ENCODE measurements at regions of chr22 and their contacts with region 1.

Region 1: DNA sequence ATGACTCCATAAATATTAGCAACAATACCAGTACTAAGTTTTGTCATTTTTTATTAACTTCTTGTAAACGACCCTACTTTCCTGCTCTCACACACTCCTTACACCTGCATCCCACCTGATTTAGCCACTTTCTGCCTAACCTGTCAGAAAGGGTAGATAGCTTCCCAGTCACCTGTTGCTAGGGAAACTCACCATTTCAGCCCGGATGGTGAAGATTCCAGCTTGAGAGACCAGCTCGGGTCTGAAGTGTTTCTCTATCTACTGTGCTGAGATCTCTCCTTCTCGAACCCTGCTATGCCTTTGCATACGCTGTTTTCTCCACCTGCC is at the start of gene PARVG:
- DNase-seq: peak in 8 of 9 donors; percentile 32 to 79 (median 75)
- ATAC-seq: peak; percentile 73
- H3K4me3 ChIP-seq: peak within 1 kb of the TSS; percentile 83
- H3K4me3 Mint-ChIP-seq: peak within 1 kb of the TSS; percentile 84 to 97 (median 92)
- H3K27ac ChIP-seq: peak within 1 kb of the TSS; percentile 80
- H3K27ac Mint-ChIP-seq: peak within 1 kb of the TSS; percentile 88 to 98 (median 95)
- H3K4me1 ChIP-seq: peaks cover 11 to 14% of the 10 kb centered on the region in 2 donors
- H3K4me1 Mint-ChIP-seq: peaks cover 15 to 33% (median 30%) of the 10 kb centered on the region in 7 donors
- H3K27me3 ChIP-seq: no peaks in the 10 kb centered on the region
- H3K27me3 Mint-ChIP-seq: peaks cover 0 to 10% (median 0%) of the 10 kb centered on the region in 5 donors
- total RNA-seq, gene PARVG: 142 to 209 (median 173) TPM

Region 2: DNA sequence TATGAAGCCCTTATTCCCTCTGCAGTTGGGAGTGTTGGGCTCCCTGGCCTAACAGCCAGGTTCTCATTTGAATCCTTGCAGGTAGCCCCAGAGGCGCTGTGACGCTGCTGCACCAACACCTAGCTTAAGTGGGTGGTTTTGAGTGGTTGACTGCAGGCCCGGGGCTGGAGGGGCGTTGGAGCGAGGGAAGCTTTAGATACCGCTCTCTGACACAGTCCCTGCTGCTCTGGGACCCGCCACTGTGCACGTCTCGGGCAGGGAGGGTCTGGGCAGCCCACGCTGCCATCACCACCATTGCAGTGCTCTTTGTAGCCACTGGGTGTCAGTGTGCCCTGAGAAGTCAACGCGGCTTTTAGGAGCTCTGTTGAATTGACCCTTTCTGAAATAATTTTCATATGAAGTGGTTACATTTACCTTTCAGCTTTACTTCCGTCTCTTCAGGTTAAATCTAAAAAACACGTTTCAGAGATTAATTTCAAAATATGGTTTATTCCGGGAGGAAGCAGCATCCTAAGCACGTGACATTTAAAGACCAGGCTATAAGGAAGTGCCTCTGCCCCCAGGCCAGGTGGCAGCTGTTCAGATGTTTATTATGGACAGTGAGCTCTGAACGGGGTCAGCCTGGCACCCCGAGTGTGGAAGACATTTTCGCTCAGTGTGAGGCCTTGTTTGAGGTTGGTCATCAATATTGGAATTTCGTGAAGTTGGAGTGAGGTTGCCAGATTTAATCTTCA is 187.5 kb before region 1 on chr22:
- CTCF ChIA-PET with region 1: no interaction called
- POLR2A ChIA-PET with region 1: no interaction called
- intact Hi-C with region 1: loop called in 1 of 2 experiments (anchors 5 kb)
- DNase-seq: peak; percentile 14 to 60 (median 52)
- ATAC-seq: peak; percentile 84
- H3K4me3 ChIP-seq: no peak overlapping the region
- H3K4me3 Mint-ChIP-seq: peak overlapping the region in 2 of 10 donors; percentile 42 to 54
- H3K27ac ChIP-seq: no peak overlapping the region
- H3K27ac Mint-ChIP-seq: peak overlapping the region in 7 of 9 donors; percentile 22 to 93 (median 68)
- H3K4me1 ChIP-seq: peaks cover 0 to 6% of the 10 kb centered on the region in 2 donors
- H3K4me1 Mint-ChIP-seq: peaks cover 26 to 42% (median 33%) of the 10 kb centered on the region in 7 donors
- H3K27me3 ChIP-seq: no peaks in the 10 kb centered on the region
- H3K27me3 Mint-ChIP-seq: no peaks in the 10 kb centered on the region

Region 3: DNA sequence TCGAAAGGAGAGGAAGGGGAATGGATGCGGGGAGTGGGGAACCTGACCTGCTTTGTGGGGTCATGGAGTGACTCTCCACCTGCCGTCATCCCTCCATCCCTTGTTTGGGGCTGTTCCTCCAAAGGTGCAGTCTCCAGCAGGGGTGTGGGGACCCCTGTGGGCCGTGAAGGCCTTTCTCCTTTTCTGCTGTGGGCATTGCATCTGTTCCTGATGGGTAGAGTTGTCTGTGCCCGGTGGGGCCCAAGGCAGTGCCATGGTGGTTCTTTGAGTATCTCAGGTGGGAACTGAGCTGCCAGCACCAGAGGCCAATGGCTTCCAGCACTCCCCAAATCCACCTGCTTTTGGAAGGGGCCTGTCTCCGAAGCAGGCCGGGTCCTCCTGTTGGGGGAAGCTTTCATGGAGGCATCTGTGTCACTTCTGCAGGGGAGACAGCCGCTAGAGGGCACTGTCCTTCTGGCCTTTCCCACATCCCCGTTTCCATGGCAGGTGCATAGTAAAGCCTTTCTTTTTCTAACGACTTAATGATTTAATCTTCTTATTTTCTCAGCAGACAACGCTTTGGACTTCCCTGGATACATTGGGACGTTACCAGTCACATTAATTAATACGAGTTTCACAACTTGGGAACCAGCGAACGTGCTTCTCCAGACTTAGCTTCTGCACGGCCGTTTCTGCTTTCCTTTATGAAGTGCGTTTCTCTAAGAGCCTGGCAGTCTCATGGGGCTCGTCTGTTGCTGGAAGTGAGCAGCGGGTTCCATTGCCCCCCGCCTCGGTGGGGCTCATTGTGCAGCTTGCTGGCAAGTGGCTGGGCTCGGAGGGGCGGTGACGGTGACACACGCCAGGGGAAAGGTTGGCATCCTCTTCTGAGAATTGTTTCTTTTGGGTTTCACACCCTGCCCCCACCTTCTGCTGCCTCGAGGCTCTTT is 99.5 kb before region 1 on chr22:
- CTCF ChIA-PET with region 1: no interaction called
- POLR2A ChIA-PET with region 1: no interaction called
- intact Hi-C with region 1: loop called (anchors 5 to 10 kb)
- DNase-seq: peak; percentile 15 to 58 (median 50)
- ATAC-seq: peak; percentile 72
- H3K4me3 ChIP-seq: no peak overlapping the region
- H3K4me3 Mint-ChIP-seq: no peak overlapping the region
- H3K27ac ChIP-seq: no peak overlapping the region
- H3K27ac Mint-ChIP-seq: no peak overlapping the region
- H3K4me1 ChIP-seq: no peaks in the 10 kb centered on the region
- H3K4me1 Mint-ChIP-seq: no peaks in the 10 kb centered on the region
- H3K27me3 ChIP-seq: no peaks in the 10 kb centered on the region
- H3K27me3 Mint-ChIP-seq: no peaks in the 10 kb centered on the region

Region 4: DNA sequence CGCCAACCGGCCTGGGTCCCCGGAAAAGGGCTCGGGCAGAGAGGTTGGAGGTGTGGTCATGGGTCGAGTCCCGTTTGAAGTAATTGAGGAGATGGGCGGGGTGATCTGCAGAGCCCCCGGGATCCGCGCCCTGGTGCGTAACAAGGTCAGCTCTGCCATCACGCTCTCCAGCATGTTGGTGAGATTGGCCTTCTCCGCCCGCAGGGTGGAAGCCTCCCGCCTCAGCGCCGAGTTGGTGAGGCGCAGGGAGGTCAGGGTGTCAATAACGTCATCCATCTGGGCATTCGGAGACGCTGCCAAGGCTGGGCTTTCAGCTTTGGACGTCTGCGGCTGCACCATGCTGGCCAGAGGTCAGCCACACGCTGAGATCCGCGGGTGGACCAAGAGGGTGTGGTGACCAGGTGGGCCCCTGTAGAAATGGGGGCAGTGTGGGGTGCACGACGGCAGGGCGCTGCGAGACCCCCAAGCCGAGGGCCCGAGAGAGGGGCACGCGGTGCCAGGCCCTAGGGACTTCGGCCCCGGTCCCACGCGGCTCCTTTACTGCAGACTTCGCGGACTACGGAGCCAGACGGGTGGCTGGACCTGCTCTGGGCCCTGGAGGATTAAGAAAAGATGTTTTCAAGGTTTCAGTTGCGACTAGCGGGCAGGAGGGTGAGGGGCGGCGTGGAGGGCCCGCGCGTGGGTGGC is 316.7 kb after region 1 on chr22:
- CTCF ChIA-PET with region 1: no interaction called
- POLR2A ChIA-PET with region 1: no interaction called
- intact Hi-C with region 1: loop called (anchors 5 kb)
- DNase-seq: peak in 2 of 9 donors; percentile 8 to 11
- ATAC-seq: no peak
- H3K4me3 ChIP-seq: peak overlapping the region; percentile 61
- H3K4me3 Mint-ChIP-seq: peak overlapping the region; percentile 42 to 89 (median 72)
- H3K27ac ChIP-seq: peak overlapping the region; percentile 80
- H3K27ac Mint-ChIP-seq: peak overlapping the region; percentile 15 to 91 (median 73)
- H3K4me1 ChIP-seq: peaks cover 4 to 28% of the 10 kb centered on the region in 2 donors
- H3K4me1 Mint-ChIP-seq: peaks cover 5 to 47% (median 29%) of the 10 kb centered on the region in 7 donors
- H3K27me3 ChIP-seq: no peaks in the 10 kb centered on the region
- H3K27me3 Mint-ChIP-seq: peaks cover 0 to 9% (median 5%) of the 10 kb centered on the region in 5 donors

Region 5: DNA sequence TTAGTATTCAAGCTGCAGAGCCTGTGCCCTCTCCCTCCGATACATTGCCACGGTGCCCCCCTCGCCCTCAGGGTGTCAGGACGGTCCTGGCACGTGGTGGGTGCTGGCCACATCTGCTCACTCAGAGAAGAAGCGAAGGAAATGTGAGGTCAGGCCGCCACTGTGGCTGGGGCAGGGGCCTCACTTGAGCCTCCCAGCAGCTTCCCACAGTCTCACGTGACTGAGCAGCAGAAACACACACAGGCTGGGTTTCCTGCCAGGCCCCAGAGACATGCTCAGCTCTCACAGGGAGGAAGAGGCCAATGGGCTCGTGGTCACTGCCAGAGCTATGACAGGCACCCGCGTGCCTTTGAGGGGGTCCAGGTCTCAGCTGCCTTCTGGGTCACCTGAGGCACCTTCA is 483.5 kb after region 1 on chr22:
- CTCF ChIA-PET with region 1: no interaction called
- POLR2A ChIA-PET with region 1: interaction called, 3 read pairs
- intact Hi-C with region 1: loop called in 1 of 2 experiments (anchors 10 kb)
- DNase-seq: peak in 6 of 9 donors; percentile 27 to 49 (median 34)
- ATAC-seq: peak; percentile 58
- H3K4me3 ChIP-seq: peak overlapping the region; percentile 30
- H3K4me3 Mint-ChIP-seq: peak overlapping the region; percentile 33 to 77 (median 56)
- H3K27ac ChIP-seq: peak overlapping the region; percentile 61
- H3K27ac Mint-ChIP-seq: peak overlapping the region; percentile 68 to 91 (median 83)
- H3K4me1 ChIP-seq: peaks cover 43 to 46% of the 10 kb centered on the region in 2 donors
- H3K4me1 Mint-ChIP-seq: peaks cover 37 to 56% (median 47%) of the 10 kb centered on the region in 7 donors
- H3K27me3 ChIP-seq: no peaks in the 10 kb centered on the region
- H3K27me3 Mint-ChIP-seq: peaks cover 0 to 9% (median 0%) of the 10 kb centered on the region in 5 donors

Region 6: DNA sequence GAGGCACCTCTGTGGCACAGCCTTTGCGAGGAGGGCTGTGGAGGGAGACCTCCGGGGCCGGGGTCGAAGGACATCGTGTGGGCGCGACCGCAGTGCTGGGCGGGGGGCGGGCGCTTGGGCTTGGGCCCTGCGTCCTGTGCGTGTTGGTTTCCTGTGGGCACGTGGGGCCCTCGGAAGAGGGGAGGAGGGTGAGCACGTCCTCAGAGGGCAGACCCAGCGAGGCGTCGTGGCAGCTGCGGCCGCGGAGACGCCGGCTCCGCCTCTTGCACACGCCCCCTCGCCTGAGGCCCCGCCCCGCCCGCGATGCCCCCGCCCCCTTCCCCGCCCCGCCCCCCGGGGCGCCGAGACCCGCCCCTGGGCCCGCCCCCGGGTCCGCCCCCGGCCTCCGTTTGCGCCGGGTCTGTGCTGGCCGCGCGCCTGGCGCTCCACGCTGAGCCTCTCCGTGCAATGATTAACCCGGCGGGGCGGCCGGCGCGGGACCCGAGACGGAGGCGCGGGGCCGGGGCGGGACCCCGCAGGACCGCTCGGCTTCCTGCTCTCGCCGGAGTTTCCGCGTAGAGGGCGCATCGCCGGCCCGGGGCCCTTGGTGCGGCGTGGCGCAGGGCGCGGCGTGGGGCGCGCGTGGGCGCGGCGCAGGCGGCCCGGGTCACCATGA is 521.3 kb after region 1 on chr22 and contains the start of gene PRR5:
- CTCF ChIA-PET with region 1: no interaction called
- POLR2A ChIA-PET with region 1: no interaction called
- intact Hi-C with region 1: loop called in 1 of 2 experiments (anchors 5 kb)
- DNase-seq: peak; percentile 73 to 85 (median 81)
- ATAC-seq: peak; percentile 94
- H3K4me3 ChIP-seq: peak within 1 kb of the TSS; percentile 64
- H3K4me3 Mint-ChIP-seq: peak within 1 kb of the TSS; percentile 72 to 83 (median 78)
- H3K27ac ChIP-seq: peak within 1 kb of the TSS; percentile 68
- H3K27ac Mint-ChIP-seq: peak within 1 kb of the TSS; percentile 74 to 91 (median 83)
- H3K4me1 ChIP-seq: peaks cover 21 to 23% of the 10 kb centered on the region in 2 donors
- H3K4me1 Mint-ChIP-seq: peaks cover 5 to 31% (median 17%) of the 10 kb centered on the region in 7 donors
- H3K27me3 ChIP-seq: no peaks in the 10 kb centered on the region
- H3K27me3 Mint-ChIP-seq: peaks cover 0 to 9% (median 0%) of the 10 kb centered on the region in 5 donors
- total RNA-seq, gene PRR5: 19.6 to 49.1 (median 44.4) TPM

Measured in naive thymus-derived CD4-positive, alpha-beta T cell (primary cell).